SK-N-SH (cell line): ENCODE measurements at regions of chr19 and their contacts with region 1.

Region 1: GRCh38 chr19:2648528-2648937 is 54.0 kb downstream of the GNG7 start:
- DNase-seq: peak; percentile 93
- H3K4me3 ChIP-seq: no peak overlapping the region
- H3K27ac ChIP-seq: no peak overlapping the region
- H3K4me1 ChIP-seq: no peaks in the 10 kb centered on the region
- H3K27me3 ChIP-seq: peaks cover 10% of the 10 kb centered on the region; the same call in 1 of the 2 replicates
- CTCF ChIP-seq: peak; percentile 92
- EP300 ChIP-seq: no peak
- RAD21 ChIP-seq: peak; percentile 98

Region 2: DNA sequence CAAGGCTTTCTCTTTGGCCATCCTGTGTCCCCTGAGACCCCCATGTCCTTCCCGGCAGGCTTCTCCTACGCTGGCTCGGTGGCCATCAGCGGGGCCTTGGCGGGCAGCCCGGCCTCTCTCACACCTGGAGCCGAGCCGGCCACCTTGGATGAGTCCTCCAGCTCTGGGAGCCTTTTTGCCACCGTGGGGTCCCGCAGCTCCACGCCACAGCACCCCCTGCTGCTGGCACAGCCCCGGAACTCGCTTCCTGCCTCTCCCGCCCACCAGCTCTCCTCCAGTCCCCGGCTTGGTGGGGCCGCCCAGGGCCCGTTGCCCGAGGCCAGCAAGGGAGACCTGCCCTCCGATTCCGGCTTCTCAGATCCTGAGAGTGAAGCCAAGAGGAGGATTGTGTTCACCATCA is 426.6 kb before region 1 on chr19:
- CTCF ChIA-PET with region 1: no interaction called
- POLR2A ChIA-PET with region 1: no interaction called
- DNase-seq: peak; percentile 70
- H3K4me3 ChIP-seq: no peak overlapping the region
- H3K27ac ChIP-seq: peak overlapping the region in 1 of 2 experiments; percentile 44; a peak in 1 of 4 replicates
- H3K4me1 ChIP-seq: peaks cover 0 to 13% of the 10 kb centered on the region in 2 experiments; a peak in 1 of 4 replicates
- H3K27me3 ChIP-seq: no peaks in the 10 kb centered on the region
- CTCF ChIP-seq: peak; percentile 40
- EP300 ChIP-seq: no peak
- RAD21 ChIP-seq: peak; percentile 15; the same call in 1 of the 2 replicates

Region 3: DNA sequence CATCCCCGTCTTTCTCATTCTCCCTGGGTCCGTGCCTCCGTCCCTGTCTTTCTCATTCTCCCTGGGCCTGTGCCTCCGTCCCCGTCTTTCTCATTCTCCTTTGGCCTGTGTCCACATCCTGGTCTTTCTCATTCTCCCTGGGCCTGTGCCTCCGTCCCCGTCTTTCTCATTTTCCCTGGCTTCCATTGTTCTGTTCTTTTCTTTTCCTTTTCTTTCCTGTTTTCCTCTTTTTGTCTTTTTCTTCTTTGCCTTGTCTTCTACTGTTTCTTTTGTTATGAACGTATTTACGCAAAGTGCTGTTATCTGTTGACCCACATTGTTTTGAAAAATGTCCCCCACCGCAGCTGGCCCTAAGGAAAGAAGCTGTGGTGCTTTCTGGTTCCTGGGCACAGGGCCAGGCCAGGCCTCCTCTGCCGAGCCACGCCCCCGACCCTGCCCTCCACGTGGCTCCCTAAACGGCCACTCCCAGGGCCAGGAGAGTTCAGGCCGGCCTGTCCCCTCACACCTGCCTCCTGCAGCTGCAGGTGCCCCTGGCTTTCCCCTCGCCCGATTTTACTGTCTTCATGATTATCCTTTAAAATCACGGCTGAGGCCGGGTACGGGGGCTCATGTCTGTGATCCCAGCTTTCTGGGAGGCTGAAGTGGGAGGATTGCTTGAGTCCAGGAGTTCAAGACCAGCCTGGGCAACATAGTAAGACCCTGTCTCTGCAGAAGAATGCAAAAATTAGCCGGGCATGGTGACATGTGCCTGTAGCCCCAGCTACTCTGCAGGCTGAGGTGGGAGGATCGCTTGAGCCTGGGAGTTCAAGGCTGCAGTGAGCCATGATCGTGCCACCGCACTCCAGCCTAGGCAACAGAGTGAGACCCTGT is 302.5 kb before region 1 on chr19:
- CTCF ChIA-PET with region 1: no interaction called
- POLR2A ChIA-PET with region 1: no interaction called
- DNase-seq: peak; percentile 75
- H3K4me3 ChIP-seq: no peak overlapping the region
- H3K27ac ChIP-seq: no peak overlapping the region
- H3K4me1 ChIP-seq: no peaks in the 10 kb centered on the region; a peak in 1 of 4 replicates
- H3K27me3 ChIP-seq: no peaks in the 10 kb centered on the region
- CTCF ChIP-seq: no peak
- EP300 ChIP-seq: no peak
- RAD21 ChIP-seq: no peak

Region 4: GRCh38 chr19:2636897-2637683 is 11.4 kb before region 1 on chr19:
- CTCF ChIA-PET with region 1: interaction called, 61 read pairs
- POLR2A ChIA-PET with region 1: no interaction called
- DNase-seq: peak; percentile 94
- H3K4me3 ChIP-seq: 0 out of 4 replicates have a peak overlapping the region, but pooled peaks of 1 of the 2 experiments have one; percentile 23
- H3K27ac ChIP-seq: no peak overlapping the region
- H3K4me1 ChIP-seq: peaks cover 0 to 3% of the 10 kb centered on the region in 2 experiments; a peak in 1 of 4 replicates
- H3K27me3 ChIP-seq: no peaks in the 10 kb centered on the region
- CTCF ChIP-seq: peak; percentile 79
- EP300 ChIP-seq: no peak
- RAD21 ChIP-seq: peak; percentile 66

Region 5: GRCh38 chr19:2661615-2662014 is 13.1 kb after region 1 on chr19:
- CTCF ChIA-PET with region 1: interaction called, 24 read pairs
- POLR2A ChIA-PET with region 1: no interaction called
- DNase-seq: no peak
- H3K4me3 ChIP-seq: no peak overlapping the region
- H3K27ac ChIP-seq: no peak overlapping the region
- H3K4me1 ChIP-seq: no peaks in the 10 kb centered on the region
- H3K27me3 ChIP-seq: no peaks in the 10 kb centered on the region
- CTCF ChIP-seq: peak; percentile 21; the same call in 1 of the 2 replicates
- EP300 ChIP-seq: no peak
- RAD21 ChIP-seq: no peak

Region 6: DNA sequence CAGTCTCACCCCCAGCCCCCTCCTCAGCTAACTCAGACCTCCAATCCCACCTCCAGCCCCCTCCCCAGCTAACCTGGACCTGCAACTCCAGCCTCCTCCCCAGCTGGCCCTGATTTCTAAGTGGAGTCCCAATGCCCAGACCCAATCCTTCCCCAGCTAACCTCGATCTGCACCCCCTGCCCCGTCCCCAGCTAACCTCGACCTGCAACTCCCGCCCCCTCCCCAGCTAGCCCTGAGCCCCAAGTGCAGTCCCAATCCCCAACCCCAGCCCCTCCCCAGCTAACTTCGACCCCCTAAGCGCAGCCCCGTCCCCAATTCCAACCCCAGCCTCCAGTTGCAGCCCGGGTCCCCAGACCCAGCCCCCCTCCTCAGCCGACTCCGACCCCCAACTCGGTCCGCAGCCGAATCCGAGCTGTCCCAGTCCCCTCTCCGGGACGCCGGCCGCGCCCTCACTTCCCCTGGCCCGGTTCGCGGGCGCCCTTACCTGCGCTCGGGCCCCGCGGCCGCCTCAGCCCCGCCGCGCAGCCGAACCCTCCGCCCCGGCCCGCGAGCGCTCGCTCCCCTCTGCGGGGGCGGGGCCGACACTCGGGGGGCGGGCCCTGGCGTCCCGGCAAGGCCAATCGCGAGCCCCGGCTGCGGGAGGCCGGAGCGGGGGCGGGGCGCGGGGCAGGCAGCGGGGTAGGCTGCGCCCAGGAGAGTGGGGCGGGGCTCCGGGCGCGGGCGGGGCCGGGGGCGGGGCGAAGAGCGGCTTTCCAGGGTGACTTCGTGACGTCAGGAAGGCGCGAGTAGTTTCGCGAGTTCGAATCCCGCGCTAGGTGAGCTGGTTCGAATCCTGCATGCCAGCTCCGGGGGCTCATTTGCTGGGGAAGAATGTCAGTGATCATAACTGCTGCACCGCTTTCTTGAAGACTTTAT is 53.9 kb after region 1 on chr19 and contains the start of gene GNG7:
- CTCF ChIA-PET with region 1: interaction called, 14 read pairs
- POLR2A ChIA-PET with region 1: no interaction called
- DNase-seq: peak; percentile 100
- H3K4me3 ChIP-seq: peak within 1 kb of the TSS; percentile 59 to 65
- H3K27ac ChIP-seq: no peak within 1 kb of the TSS; a peak in 1 of 4 replicates
- H3K4me1 ChIP-seq: peaks cover 0 to 5% of the 10 kb centered on the region in 2 experiments; a peak in 1 of 4 replicates
- H3K27me3 ChIP-seq: no peaks in the 10 kb centered on the region; the same call in 1 of the 2 replicates
- CTCF ChIP-seq: no peak
- EP300 ChIP-seq: no peak
- RAD21 ChIP-seq: no peak
- polyA plus RNA-seq, gene GNG7: 1.6 and 2.2 TPM in 2 replicates

Region 7: GRCh38 chr19:2739602-2740313 is 91.2 kb after region 1 on chr19 and contains the start of gene SLC39A3:
- CTCF ChIA-PET with region 1: interaction called, 21 read pairs
- POLR2A ChIA-PET with region 1: no interaction called
- DNase-seq: peak; percentile 100
- H3K4me3 ChIP-seq: peak within 1 kb of the TSS; percentile 84 to 94
- H3K27ac ChIP-seq: no peak within 1 kb of the TSS; a peak in 1 of 4 replicates
- H3K4me1 ChIP-seq: peaks cover 0 to 5% of the 10 kb centered on the region in 2 experiments; a peak in 1 of 4 replicates
- H3K27me3 ChIP-seq: peaks cover 1% of the 10 kb centered on the region; the same call in 1 of the 2 replicates
- CTCF ChIP-seq: no peak
- EP300 ChIP-seq: no peak
- RAD21 ChIP-seq: no peak
- polyA plus RNA-seq, gene SLC39A3: 42.2 and 45.2 TPM in 2 replicates

Region 8: DNA sequence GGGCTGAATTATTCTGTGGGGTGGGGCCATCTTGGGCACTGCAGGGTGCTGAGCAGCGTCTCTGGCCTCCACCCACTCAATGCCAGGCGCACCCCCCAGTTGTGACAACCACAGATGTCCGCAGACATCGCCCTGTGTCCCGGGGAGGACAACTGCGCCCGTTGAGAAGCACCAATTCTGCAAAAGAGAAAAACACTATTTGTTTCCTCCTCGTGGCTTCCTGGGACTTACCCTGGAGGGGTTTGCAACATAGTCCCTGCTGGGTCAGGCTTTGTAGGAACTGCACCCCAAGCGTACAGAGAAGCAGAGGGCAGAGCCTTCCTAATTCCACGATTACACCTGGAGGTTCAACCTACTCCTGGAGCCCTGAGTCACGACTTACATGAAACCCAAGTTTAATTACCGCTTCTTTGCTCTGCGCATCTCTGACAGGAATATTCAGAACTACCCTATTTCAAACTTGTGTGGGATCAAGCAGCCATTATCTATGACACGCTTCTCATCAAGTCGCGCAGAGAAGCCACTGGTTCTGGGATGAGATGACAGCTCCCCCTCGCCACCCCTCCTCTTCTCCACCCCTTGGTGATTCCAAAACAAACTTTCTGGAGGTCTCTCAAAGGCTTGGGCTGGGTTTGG is 102.4 kb after region 1 on chr19:
- CTCF ChIA-PET with region 1: interaction called, 142 read pairs
- POLR2A ChIA-PET with region 1: interaction called, 5 read pairs
- DNase-seq: no peak
- H3K4me3 ChIP-seq: no peak overlapping the region
- H3K27ac ChIP-seq: no peak overlapping the region
- H3K4me1 ChIP-seq: peaks cover 0 to 3% of the 10 kb centered on the region in 2 experiments; a peak in 1 of 4 replicates
- H3K27me3 ChIP-seq: no peaks in the 10 kb centered on the region
- CTCF ChIP-seq: no peak
- EP300 ChIP-seq: no peak
- RAD21 ChIP-seq: no peak

Region 9: DNA sequence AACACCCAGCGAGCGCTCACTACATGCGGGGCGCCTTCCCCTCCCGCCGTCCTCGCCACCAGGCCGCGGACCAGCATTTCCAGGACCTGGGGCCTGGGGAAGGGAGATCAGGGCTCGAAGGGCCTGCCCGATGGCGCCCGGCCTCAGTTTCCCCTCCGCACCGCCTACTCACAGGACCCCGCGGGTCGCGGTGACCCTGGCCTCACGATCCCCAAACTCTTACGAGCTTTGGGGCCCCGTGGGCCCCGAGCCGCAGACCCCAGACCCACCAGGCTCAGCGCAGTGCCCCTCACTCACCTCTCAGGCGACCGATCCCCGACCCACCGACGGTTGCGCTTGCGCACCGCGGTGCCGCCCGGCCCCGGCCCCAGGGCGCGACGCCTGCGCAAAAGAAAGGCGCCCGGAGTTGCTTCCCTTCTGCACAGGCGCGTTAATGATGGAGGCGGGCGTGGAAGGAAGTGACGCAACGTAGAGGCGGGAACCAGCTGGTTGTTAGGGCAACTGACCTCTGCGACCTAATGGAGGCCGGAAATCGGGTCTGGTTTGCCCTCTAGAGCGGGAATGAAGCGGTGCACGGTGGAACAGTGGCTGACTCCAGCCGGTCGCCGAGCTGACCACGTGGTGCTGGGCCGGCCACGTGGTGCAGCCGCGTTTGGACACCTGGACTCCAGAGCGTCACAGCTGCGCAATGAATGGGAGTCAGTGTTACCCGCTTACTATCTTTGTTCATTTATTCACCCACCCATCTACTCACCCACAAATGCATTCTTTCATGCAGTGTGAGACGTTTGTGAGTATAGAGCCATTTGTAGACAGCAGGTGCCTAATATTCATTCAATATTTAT is 134.6 kb after region 1 on chr19 and contains the start of gene SGTA:
- CTCF ChIA-PET with region 1: interaction called, 12 read pairs
- POLR2A ChIA-PET with region 1: no interaction called
- DNase-seq: peak; percentile 99
- H3K4me3 ChIP-seq: peak within 1 kb of the TSS; percentile 93 to 99
- H3K27ac ChIP-seq: peak within 1 kb of the TSS; percentile 69 to 85
- H3K4me1 ChIP-seq: peaks cover 4 to 25% of the 10 kb centered on the region in 2 experiments; a peak in 2 of 4 replicates
- H3K27me3 ChIP-seq: no peaks in the 10 kb centered on the region
- CTCF ChIP-seq: peak; percentile 38
- EP300 ChIP-seq: no peak
- RAD21 ChIP-seq: no peak
- polyA plus RNA-seq, gene SGTA: 60.4 and 78.4 TPM in 2 replicates